GM13976 (cell line): ENCODE measurements at regions of chr2 and their contacts with region 1.

Region 1: DNA sequence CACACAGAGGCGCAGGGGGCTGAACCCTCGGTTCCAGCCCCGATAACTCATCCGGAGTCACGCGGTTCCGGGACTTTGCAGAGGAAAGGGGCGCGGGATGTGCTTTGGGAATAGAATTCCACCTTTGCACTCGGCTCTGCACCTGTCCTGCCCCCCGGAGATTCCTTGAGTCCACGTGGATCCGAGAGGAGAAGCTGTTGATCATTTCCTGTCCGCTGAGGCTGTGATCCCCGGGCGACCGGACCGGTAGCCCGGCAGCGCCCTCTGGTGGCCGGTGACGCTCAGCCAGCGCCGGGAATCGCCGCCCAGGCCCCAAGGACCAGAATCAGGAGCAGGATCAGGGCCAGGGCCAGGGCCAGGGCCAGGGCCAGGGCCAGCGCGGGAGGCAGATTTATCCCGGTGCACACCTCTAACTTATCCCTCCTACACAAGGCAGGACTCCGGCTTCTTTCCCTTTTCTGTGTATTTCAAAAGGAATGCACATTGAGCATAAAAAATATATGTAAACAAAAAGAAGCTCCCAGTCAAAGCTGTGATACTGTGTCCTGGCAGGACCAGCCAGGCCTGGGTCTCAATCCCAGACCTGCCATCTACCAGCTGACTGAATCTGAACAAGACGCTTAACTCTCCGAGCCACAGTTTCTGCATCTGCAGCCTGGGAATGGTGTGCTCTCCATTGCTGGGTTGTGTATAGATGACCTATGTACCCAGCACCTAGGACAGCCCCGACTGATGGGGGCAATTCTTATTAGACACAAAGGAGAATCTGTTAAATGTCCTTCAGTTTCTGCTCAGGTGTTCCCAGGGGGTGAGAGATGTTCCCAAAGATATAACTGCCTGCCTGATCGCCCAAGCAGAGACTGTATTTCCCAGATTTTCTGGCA is 8.5 kb upstream of the SPATA3 start:
- DNase-seq: peak; percentile 92
- CTCF ChIP-seq: peak; percentile 97

Region 2: GRCh38 chr2:230762317-230762896 is 225.0 kb before region 1 on chr2:
- in situ Hi-C with region 1: no loop called
- DNase-seq: no peak
- CTCF ChIP-seq: no peak

Region 3: DNA sequence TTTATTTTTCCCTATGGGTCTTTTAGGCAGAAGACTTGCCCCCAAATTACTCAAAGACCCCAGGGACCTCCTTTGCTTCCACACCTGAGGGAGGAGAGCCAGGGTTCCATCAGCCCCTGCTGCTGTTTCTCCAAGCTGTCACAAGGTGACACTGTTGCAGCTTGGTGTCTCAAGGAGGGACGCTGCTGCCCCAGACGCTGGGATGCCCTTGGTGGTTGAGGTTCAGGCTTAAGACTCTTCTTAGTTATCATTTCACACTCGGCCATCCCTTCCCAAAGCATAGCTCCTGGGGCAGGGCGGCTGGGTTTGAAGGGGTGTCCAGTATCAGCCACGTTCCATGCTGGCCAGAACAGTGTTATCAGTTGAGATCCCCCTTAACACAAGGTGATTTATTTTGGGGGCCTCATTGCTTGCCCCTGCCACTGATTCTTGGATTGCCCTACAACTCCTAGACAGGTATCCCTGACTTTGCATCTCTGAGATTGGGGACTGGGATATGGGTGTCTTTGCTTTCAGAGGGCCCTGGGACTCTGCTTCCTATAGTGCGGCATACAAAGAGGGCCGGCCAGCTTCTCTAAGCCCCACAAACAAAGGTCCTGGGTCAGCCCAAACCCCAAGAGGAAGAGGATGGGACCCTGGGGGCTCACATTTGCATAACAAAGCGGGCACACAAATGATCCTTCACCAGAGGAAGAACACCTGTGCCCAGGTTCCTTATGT is 85.0 kb before region 1 on chr2:
- in situ Hi-C with region 1: loop called (anchors 5 kb)
- DNase-seq: peak; percentile 82
- CTCF ChIP-seq: peak; percentile 89

Region 4: DNA sequence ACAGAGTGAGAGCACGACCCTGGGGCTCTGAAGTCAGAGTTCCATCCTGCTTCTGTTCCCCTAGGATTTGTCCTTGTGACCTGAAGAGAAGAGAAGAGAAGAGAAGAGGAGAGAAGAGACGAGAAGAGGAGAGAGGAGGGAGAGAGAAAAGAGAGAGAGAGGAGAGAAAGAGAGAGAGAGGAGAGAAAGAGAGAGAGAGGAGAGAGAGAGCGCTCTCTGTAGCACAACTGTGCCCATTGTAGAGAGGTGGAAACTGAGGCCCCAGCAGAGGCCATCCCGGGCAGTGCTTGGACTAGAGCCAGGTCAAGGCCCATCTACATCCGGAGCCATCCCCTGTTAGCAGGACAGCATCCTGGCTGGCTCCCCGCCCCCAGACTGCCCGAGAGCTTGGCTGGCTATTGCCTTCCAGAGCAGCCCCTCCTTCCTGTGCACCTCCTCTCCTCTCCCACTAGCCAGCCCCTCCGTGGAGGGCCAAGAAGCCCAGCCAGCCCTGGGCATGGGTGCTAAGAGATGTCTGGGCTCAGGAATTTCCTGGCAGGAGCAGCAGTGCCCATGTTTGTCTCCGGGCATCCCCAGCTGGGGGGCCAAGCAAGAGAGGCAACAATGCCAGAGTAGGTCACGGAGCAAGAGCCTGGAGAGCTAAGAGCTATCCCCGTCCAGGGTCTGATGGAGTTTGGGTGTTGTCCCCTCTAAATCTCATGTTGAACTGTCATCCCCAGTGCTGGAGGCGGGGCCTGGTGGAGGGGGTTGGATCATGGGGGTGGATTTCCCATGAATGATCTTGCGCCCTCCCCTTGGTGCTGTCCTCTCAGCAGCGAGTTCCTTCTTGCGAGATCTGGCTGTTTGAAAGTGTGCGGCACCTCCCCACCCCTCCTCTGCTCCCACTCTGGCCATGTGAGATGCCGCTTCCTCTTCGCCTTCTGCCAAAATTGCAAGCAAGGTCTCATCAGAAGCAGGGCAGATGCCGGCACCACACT is 44.2 kb before region 1 on chr2:
- in situ Hi-C with region 1: loop called (anchors 5 kb)
- DNase-seq: peak; percentile 87
- CTCF ChIP-seq: no peak

Region 5: GRCh38 chr2:231411831-231412617 is 424.6 kb after region 1 on chr2:
- in situ Hi-C with region 1: no loop called
- DNase-seq: peak; percentile 90
- CTCF ChIP-seq: peak; percentile 89